Caco-2 (cell line): ENCODE measurements at regions of chr11 and their contacts with region 1.

Region 1: GRCh38 chr11:38562562-38562961 is 1964.5 kb upstream of the RAG2 start:
- DNase-seq: no peak
- H3K4me3 ChIP-seq: no peak overlapping the region
- H3K4me3 Mint-ChIP-seq: no peak overlapping the region
- H3K27ac Mint-ChIP-seq: no peak overlapping the region
- H3K4me1 ChIP-seq: no peaks in the 10 kb centered on the region
- H3K4me1 Mint-ChIP-seq: no peaks in the 10 kb centered on the region
- H3K27me3 ChIP-seq: no peaks in the 10 kb centered on the region
- H3K27me3 Mint-ChIP-seq: no peaks in the 10 kb centered on the region
- CTCF ChIP-seq: no peak

Region 2: DNA sequence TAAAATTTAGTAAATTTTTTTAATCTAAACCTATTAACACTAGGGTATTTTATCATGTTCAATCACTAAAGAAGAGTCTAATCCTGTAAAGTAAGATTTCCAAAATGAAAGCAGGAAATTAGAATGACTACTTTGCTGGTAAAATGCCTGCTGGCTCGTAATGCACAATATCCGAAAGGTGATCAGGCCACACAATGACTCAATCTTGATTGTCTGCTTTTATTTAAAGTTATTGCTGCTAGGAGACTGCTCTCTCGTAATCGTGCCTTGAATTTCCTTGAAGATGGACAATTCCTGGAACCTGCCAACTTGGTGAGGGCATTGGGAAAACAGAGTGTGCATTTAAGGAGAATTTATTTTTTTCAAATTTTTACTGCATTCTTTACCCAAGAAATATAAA is 178.0 kb before region 1 on chr11:
- CTCF ChIA-PET with region 1: interaction called, 11 read pairs
- POLR2A ChIA-PET with region 1: no interaction called
- intact Hi-C with region 1: no loop called
- DNase-seq: no peak
- H3K4me3 ChIP-seq: no peak overlapping the region
- H3K4me3 Mint-ChIP-seq: no peak overlapping the region
- H3K27ac Mint-ChIP-seq: no peak overlapping the region
- H3K4me1 ChIP-seq: no peaks in the 10 kb centered on the region
- H3K4me1 Mint-ChIP-seq: no peaks in the 10 kb centered on the region
- H3K27me3 ChIP-seq: no peaks in the 10 kb centered on the region
- H3K27me3 Mint-ChIP-seq: no peaks in the 10 kb centered on the region
- CTCF ChIP-seq: no peak

Region 3: GRCh38 chr11:38791302-38791961 is 228.9 kb after region 1 on chr11:
- CTCF ChIA-PET with region 1: no interaction called
- POLR2A ChIA-PET with region 1: no interaction called
- intact Hi-C with region 1: no loop called
- DNase-seq: peak; percentile 55 to 76
- H3K4me3 ChIP-seq: no peak overlapping the region
- H3K4me3 Mint-ChIP-seq: no peak overlapping the region
- H3K27ac Mint-ChIP-seq: no peak overlapping the region
- H3K4me1 ChIP-seq: peaks cover 8% of the 10 kb centered on the region
- H3K4me1 Mint-ChIP-seq: no peaks in the 10 kb centered on the region
- H3K27me3 ChIP-seq: no peaks in the 10 kb centered on the region
- H3K27me3 Mint-ChIP-seq: no peaks in the 10 kb centered on the region
- CTCF ChIP-seq: peak; percentile 79 to 80